Heart right ventricle (tissue), 16 donors: ENCODE measurements at regions of chr1 and their contacts with region 1.

Region 1: GRCh38 chr1:212284744-212285684 is at the start of gene PPP2R5A:
- DNase-seq: peak; percentile 99
- ATAC-seq: peak; percentile 95 to 98 (median 98)
- H3K4me3 ChIP-seq: peak within 1 kb of the TSS; percentile 75 to 95 (median 91)
- H3K27ac ChIP-seq: peak within 1 kb of the TSS; percentile 96 to 99 (median 98)
- H3K4me1 ChIP-seq: peaks cover 0 to 46% (median 32%) of the 10 kb centered on the region in 9 donors
- H3K27me3 ChIP-seq: no peaks in the 10 kb centered on the region
- CTCF ChIP-seq: peak in 7 of 9 donors; percentile 6 to 52 (median 33)
- total RNA-seq, gene PPP2R5A: 48.6 to 86.8 (median 57.3) TPM

Region 2: DNA sequence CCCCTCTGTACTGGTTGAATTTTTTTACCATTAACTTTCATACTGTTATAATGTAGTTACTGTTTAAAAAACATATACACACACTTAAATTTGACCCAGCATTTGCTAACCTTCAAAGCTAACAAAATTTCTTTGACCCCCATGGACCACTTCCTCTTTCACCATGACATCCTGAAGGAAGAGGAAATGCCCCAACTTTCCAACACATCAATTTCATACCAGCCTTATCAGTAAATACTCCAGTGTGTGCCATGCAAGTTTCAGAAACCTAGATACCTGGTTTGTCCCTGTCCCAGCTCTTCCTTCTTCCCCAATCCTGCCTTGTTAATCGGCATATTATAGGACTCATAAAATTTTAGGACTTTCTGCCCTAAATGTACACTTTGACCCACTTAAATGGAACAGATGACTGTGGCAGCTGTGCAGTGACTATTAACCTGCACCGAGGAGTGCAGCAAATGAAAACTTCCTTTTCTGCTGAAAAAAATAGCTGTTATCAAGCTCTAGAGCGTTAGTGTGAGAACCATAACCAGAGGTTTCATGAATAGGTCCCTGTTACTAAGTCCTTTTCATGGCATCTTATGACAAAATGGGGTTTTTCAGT is 195.4 kb before region 1 on chr1:
- intact Hi-C with region 1: loop called in 1 of 10 experiments (anchors 1 kb)
- DNase-seq: no peak
- ATAC-seq: no peak
- H3K4me3 ChIP-seq: no peak overlapping the region
- H3K27ac ChIP-seq: peak overlapping the region in 3 of 10 donors; percentile 11 to 78 (median 24)
- H3K4me1 ChIP-seq: peaks cover 0 to 35% (median 20%) of the 10 kb centered on the region in 9 donors
- H3K27me3 ChIP-seq: no peaks in the 10 kb centered on the region
- CTCF ChIP-seq: no peak

Region 3: DNA sequence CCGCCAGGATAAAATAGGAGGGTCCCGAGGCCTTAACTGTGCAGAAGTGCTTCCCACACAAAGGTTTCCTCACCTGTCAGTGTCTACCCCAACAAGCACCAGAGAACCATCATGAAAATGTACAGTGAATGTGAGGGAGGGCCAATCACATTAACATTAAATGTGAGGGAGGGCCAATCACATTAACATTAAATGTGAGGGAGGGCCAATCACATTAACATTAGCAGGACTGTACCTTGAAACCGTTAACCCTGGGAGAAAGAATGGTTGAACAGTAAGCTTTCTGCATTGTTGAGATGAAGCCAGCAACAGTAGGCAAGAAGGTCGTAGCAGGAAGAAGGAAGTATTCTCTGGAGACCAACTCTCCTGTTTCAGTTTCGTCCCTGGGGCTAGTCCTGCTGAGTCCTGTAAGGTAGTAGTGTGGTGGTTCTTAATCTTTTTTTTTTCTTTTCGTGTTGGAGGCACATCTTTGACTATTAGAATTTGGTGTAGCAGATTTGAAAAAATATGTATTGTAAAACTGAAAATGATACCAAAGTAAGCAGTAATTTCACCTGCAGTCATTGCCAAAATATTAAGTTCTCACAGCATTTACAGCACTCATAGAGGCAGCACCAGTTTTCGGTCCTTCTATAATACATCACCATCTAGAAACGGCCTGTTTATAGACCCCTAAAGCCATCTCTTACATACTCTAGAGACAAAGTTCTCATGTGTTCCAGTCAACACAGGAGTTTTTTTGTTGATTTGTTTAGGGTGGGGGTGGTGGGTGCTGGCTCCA is 98.4 kb before region 1 on chr1:
- intact Hi-C with region 1: loop called in 1 of 10 experiments (anchors 10 kb)
- DNase-seq: no peak
- ATAC-seq: peak in 5 of 8 donors; percentile 20 to 68 (median 46)
- H3K4me3 ChIP-seq: no peak overlapping the region
- H3K27ac ChIP-seq: peak overlapping the region in 3 of 10 donors; percentile 57 to 66 (median 58)
- H3K4me1 ChIP-seq: peaks cover 5 to 37% (median 33%) of the 10 kb centered on the region in 9 donors
- H3K27me3 ChIP-seq: no peaks in the 10 kb centered on the region
- CTCF ChIP-seq: no peak

Region 4: DNA sequence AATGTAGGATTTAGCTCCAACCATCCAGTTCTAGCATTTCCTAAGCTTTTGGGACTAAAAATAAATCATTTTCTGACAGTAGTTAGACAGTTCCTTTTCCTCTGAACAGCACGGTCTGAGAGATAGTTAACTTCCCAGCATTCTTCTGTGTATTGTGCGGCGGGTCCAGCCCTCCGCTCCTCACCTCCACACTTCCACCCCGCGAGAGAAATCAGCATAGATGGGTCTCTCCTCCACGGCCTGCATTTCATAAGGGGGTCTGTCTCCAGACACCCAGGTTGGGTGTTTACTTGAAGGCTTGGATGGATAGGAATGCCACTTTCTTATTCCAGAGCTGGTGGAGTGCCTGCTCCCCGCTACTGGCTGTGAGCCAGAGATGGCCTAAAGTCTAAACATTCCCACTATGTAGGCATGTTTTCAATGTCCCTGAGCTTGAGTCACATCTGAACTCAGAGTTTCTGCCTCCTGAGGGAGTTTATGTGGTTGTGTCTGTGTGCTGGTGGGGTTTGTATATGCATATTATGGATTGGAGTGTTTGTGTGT is 37.8 kb before region 1 on chr1:
- intact Hi-C with region 1: loop called in 2 of 10 experiments (anchors 2 to 5 kb)
- DNase-seq: no peak
- ATAC-seq: peak in 6 of 8 donors; percentile 39 to 63 (median 54)
- H3K4me3 ChIP-seq: no peak overlapping the region
- H3K27ac ChIP-seq: peak overlapping the region in 7 of 10 donors; percentile 0 to 51 (median 45)
- H3K4me1 ChIP-seq: peaks cover 2 to 45% (median 27%) of the 10 kb centered on the region in 9 donors
- H3K27me3 ChIP-seq: no peaks in the 10 kb centered on the region
- CTCF ChIP-seq: no peak